GM10248 (cell line): ENCODE measurements at regions of chr5 and their contacts with region 1.

Region 1: DNA sequence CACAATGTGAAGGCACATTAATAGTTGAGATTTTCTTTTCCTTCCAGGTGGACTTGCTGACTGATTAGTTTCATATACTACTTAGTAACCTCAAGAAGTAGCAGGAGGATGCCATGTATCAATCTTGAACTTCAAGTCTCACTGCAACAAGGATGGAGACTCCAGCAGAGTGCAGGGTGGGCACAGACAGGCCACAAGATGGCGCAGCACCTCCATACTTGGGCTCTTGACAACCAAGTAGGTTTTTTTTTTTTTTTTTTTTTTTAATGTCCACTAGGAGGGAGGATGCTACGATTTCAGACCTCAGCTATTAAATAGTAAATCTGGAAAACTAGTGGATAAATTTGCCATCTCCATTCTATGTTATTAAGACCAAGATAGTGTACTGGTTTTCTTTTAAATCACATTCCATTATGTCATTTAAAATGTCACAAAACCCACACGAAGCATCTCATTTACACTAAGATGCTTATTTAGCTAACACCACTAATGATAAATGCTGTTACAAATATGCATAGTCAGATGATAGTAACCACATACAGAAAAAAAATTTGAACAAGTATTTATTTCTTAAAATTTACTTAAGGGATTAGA is 58.6 kb downstream of the IL6ST start:
- DNase-seq: peak; percentile 62
- CTCF ChIP-seq: peak; percentile 86

Region 2: DNA sequence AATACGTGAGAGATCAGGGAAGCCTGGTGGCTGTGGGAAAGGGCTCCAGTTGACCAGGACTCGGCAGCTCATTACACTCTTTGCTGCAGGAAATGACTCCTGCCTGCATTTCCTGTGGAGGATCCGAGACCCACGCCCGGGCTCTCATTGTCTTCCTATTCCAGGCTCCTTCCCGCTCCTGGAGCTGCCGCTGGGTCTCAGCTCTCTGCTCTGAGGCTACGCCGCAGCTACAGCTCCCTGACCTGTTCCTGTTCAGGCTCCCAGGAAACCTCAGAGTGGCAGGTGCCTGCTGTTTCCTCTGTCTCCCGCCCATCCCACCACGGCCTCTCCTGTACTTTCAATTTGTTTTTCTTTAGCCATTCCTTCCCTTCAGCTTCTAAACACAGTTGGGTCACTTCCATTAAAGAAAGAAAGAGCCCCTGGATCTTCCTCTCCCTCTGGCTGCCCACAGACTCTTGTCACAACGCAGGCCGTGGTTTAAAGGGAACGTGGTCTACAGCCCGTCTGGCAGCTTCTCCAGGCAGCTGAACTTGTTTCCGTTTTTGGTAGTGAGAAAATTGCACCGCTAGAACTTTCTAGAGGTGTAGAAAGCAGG is 12.9 kb before region 1 on chr5:
- CTCF ChIA-PET with region 1: interaction called, 36 read pairs
- POLR2A ChIA-PET with region 1: interaction called, 4 read pairs
- DNase-seq: no peak
- CTCF ChIP-seq: no peak

Region 3: DNA sequence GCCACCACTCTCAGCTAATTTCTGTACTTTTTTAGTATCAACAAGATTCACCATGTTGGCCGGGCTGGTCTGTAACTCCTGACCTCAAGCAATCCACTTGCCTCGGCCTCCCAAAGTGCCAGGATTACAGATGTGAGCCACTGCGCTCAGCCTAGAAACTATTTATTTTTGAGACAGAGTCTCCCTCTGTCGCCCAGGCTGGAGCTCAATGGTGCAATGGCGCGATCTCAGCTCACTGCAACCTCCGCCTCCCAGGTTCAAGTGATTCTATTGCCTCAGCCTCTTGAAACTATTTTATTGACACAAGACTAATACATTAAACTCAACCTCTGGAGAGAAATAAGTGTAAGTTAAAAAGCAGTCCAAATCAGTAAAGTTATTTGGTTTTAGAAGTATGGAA is 24.6 kb after region 1 on chr5:
- CTCF ChIA-PET with region 1: interaction called, 10 read pairs
- POLR2A ChIA-PET with region 1: no interaction called
- DNase-seq: no peak
- CTCF ChIP-seq: no peak

Region 4: GRCh38 chr5:56200856-56201666 is 264.9 kb after region 1 on chr5:
- CTCF ChIA-PET with region 1: interaction called, 65 read pairs
- POLR2A ChIA-PET with region 1: no interaction called
- DNase-seq: peak; percentile 73
- CTCF ChIP-seq: peak; percentile 54